Activated T-helper 2 cell treated with anti-CD3 and anti-CD28 coated beads, Interferon-gamma antibody, Interleukin-2, Interleukin-4, amounts not matched to agents 10 μg/mL and 5 μg/mL and 100 μg/mL, durations not matched to agents 14 hours and 24 hours and 36 hours (primary cell): ENCODE measurements at regions of chr1 and their contacts with region 1.

Region 1: DNA sequence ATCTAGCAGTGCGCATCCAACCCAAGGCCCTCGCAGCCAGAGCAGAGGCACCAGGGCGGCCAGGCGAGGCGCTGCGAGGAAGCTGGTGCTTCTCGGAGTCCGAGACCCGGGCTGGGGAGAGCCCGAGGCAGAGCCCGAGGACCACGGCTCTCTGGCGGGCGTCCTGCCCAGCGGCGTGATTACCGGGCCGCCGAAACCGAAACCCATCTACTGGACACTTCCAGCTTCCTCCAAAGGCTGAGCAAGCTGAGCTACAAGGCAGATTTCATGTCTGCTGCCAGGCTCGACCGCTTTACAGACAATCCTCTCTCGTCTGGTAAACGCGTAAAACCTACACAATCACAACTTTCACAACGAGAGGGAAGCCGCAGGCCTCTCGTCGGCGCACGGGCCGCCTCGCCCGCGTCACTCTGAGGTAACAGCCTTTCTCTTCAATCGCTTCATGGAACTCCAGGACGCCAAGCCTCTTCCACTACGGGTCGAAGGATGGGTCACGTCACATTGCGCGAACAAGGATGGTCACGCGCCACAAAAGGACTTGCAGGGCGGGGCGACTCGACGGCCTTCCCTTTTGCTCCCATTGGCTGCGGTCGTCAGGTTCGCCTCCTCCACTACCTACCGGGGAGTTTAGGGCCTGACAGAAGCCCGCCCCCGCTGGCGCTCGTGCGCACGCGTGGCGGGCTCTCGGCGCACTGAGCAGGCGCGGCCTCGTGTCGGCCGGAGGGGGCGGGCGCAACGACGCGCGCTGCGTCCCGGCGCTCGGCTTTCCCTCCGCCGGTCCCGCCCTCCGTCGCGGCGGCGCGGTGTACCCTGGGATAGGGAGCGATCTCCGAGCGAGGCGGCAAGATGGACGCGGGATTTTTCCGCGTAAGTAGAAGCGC is at the start of gene SRRM1:
- DNase-seq: peak; percentile 99
- H3K4me3 Mint-ChIP-seq: peak within 1 kb of the TSS; percentile 90
- H3K27ac Mint-ChIP-seq: peak within 1 kb of the TSS; percentile 97
- H3K4me1 Mint-ChIP-seq: peaks cover 38% of the 10 kb centered on the region
- H3K27me3 Mint-ChIP-seq: no peaks in the 10 kb centered on the region
- total RNA-seq, gene SRRM1: 212 and 223 TPM in 2 replicates

Region 2: DNA sequence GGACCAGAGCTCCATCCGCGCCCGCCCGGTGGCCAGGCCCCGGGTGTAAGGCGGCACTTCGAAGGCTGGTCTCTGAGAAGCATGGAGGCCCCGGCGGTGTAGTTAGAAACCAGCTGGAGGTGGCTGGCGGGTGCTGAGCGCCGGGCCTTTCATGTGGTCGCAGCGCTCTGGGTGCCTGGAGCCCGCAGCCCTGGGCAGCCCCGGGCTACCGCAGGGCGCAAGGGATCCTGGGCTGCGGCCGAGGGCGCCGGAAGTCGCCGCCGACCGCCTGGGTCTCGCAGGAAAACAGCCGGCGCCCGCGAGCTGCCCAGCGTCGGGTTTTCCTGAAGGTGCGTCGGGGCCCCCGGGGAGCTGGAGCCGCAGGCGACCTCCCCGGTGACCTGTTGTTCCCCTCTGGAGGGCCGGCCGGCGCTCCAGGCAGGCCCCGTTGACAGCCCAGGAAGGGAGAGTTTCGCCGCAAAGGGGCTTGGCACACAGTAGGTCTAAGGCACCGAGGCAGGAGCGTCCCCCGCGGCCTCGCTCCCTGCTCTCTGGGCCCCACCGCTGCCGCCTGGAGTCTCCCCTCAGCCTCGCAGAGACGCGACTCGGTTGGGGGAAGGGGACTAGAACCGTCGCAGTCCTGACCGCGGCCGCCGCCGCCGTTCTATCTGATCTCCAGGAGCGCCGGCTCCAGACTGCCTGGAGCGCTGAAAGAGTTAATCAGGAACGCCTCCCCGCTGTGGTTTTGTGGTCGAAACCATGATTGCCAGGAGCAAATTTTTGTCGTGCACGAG is 320.8 kb before region 1 on chr1:
- intact Hi-C with region 1: loop called (anchors 2 kb)
- DNase-seq: peak; percentile 82
- H3K4me3 Mint-ChIP-seq: peak overlapping the region; percentile 67
- H3K27ac Mint-ChIP-seq: peak overlapping the region; percentile 43
- H3K4me1 Mint-ChIP-seq: peaks cover 26% of the 10 kb centered on the region
- H3K27me3 Mint-ChIP-seq: peaks cover 86% of the 10 kb centered on the region

Region 3: GRCh38 chr1:24502709-24503058 is 140.0 kb before region 1 on chr1 and contains the start of gene RCAN3:
- intact Hi-C with region 1: loop called (anchors 1 kb)
- DNase-seq: peak; percentile 90
- H3K4me3 Mint-ChIP-seq: peak within 1 kb of the TSS; percentile 96
- H3K27ac Mint-ChIP-seq: peak within 1 kb of the TSS; percentile 99
- H3K4me1 Mint-ChIP-seq: peaks cover 70% of the 10 kb centered on the region
- H3K27me3 Mint-ChIP-seq: no peaks in the 10 kb centered on the region
- total RNA-seq, gene RCAN3: 31.9 and 33.8 TPM in 2 replicates

Region 4: GRCh38 chr1:24657781-24658180 is 15.1 kb after region 1 on chr1:
- intact Hi-C with region 1: no loop called
- DNase-seq: no peak
- H3K4me3 Mint-ChIP-seq: no peak overlapping the region
- H3K27ac Mint-ChIP-seq: no peak overlapping the region
- H3K4me1 Mint-ChIP-seq: peaks cover 27% of the 10 kb centered on the region
- H3K27me3 Mint-ChIP-seq: no peaks in the 10 kb centered on the region

Region 5: DNA sequence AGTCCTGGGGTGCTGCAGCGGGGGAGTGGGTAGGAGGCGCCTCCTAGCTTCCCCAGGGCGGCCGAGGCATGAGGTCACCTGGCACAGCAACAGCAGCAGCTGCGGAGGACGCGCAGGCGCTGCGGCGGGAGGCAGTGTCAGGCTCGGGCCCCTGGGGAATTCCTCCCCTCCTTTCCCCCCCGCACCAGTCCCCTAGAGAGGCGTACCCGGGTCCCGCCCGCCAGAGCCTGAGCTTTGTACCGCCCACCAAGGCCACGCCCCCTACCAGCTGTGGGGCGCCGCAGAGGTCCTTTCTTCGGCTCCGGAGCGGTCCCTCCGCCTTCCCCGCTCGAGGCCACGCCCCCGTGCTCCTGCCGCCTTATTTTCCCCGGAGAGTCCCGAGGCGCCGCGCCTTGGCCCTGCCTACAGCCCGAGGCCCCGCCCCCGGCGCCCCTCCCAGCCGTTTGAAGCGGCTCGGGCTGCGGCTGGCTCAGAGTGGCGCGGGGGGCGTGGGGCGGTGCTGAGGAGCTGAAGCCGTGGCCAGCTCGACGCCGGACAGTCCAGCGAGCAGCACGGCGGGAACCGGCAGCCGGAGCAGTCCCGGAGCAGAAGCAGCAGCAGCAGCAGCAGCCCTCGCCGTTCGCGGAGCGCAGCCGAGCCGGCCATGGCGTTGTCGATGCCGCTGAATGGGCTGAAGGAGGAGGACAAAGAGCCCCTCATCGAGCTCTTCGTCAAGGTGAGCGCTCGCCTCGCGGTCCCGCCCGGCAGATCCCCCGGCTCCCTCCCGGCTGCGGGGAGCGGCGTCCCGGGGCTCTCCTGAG is 102.4 kb after region 1 on chr1 and contains the start of gene CLIC4:
- intact Hi-C with region 1: loop called (anchors 2 kb)
- DNase-seq: peak; percentile 100
- H3K4me3 Mint-ChIP-seq: peak within 1 kb of the TSS; percentile 91
- H3K27ac Mint-ChIP-seq: peak within 1 kb of the TSS; percentile 84
- H3K4me1 Mint-ChIP-seq: peaks cover 51% of the 10 kb centered on the region
- H3K27me3 Mint-ChIP-seq: no peaks in the 10 kb centered on the region
- total RNA-seq, gene CLIC4: 17.9 and 18.2 TPM in 2 replicates